Lower lobe of right lung (tissue), 2 donors: ENCODE measurements at regions of chr18 and their contacts with region 1.

Region 1: DNA sequence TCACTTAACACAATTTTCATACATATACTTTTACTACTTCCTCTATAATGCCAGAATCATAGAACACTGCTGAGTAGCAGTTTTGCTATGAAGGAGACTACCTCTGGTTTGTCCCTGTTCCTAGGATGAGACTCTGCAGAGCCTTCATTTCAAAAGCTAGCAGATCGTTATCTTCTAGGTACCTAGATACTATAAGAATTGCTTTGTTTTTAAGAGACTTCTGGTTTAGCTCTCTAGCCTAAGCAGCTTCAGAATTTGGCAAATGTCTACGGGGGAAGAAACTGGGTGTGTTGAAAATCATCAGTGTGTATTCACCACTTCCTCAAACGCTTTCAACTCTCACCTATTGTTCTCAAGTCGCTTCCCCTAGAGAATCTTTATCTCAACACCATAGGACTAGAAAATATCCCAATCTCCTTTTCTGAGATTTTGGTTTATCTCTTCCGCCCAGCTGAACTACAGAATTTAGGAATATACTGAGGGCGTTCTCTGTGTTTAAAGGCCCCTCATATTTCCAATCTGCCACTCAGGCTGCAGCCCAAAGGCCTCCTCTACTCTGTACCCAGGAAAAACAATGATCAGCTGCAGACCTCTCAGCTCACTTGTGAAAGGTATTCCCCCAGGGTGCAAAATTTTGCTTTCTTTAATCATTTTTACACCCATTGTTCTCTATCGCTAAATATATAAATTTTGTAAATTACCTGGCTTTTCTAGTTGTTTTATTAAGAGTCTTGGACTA is 28.7 kb downstream of the SMAD2 start:
- DNase-seq: no peak
- ATAC-seq: peak; percentile 71 to 77
- H3K4me3 ChIP-seq: no peak overlapping the region
- H3K27ac ChIP-seq: peak overlapping the region; percentile 7
- H3K4me1 ChIP-seq: peaks cover 32% of the 10 kb centered on the region
- H3K27me3 ChIP-seq: no peaks in the 10 kb centered on the region
- CTCF ChIP-seq: no peak

Region 2: DNA sequence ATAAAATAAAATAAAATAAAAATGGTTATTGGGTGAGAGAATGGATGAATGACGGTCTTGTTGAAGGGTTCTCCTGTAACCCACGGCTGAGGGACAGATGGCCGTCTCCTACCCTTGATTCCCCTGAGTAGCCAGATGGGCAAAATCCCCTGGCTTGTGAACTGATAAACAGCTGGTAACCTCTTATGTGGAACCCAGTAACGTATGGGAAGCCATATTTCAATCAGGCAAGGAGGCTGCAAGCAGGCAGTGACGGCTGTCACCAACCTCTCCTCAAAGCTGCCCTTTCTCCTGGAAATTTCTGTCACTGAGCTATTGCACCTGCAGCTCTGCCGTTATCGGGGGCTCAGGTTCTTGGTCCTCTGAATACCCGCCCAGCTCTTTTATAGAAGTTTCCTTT is 193.9 kb after region 1 on chr18:
- intact Hi-C with region 1: no loop called
- DNase-seq: no peak
- ATAC-seq: no peak
- H3K4me3 ChIP-seq: no peak overlapping the region
- H3K27ac ChIP-seq: no peak overlapping the region
- H3K4me1 ChIP-seq: no peaks in the 10 kb centered on the region
- H3K27me3 ChIP-seq: no peaks in the 10 kb centered on the region
- CTCF ChIP-seq: no peak

Region 3: GRCh38 chr18:48230467-48231113 is 328.8 kb after region 1 on chr18:
- intact Hi-C with region 1: loop called (anchors 10 kb)
- DNase-seq: peak; percentile 79
- ATAC-seq: peak; percentile 82 to 86
- H3K4me3 ChIP-seq: no peak overlapping the region
- H3K27ac ChIP-seq: no peak overlapping the region
- H3K4me1 ChIP-seq: peaks cover 43% of the 10 kb centered on the region
- H3K27me3 ChIP-seq: no peaks in the 10 kb centered on the region
- CTCF ChIP-seq: peak; percentile 48

Region 4: DNA sequence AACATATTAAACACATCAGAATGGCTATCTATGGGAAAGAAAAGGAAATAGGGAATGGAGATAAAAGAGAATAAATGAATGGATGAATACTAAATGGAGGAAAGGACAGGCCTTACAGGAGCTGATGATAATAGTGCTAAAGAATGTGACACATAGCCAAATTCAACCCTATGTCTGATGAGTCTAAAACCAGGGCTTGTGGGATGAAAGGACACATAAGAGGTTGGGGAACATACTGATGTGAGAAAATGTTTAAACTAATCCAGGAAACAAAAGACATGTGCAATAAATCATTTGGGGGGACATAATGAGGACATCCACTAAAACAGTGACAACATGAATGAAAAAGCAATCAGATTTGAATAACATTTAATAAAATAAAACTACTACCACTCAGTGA is 1438.7 kb after region 1 on chr18:
- intact Hi-C with region 1: no loop called
- DNase-seq: no peak
- ATAC-seq: no peak
- H3K4me3 ChIP-seq: no peak overlapping the region
- H3K27ac ChIP-seq: no peak overlapping the region
- H3K4me1 ChIP-seq: no peaks in the 10 kb centered on the region
- H3K27me3 ChIP-seq: no peaks in the 10 kb centered on the region
- CTCF ChIP-seq: no peak